Ovary (tissue), 10 donors: ENCODE measurements at regions of chr7 and their contacts with region 1.

Region 1: GRCh38 chr7:4681886-4682620 is at the start of gene FOXK1:
- DNase-seq: peak; percentile 73 to 88 (median 82)
- H3K4me3 ChIP-seq: peak within 1 kb of the TSS; percentile 81
- H3K27ac ChIP-seq: peak within 1 kb of the TSS; percentile 67 to 89
- H3K4me1 ChIP-seq: peaks cover 5% of the 10 kb centered on the region
- H3K27me3 ChIP-seq: no peaks in the 10 kb centered on the region
- CTCF ChIP-seq: no peak
- EP300 ChIP-seq: no peak
- POLR2A ChIP-seq: peak; percentile 32
- total RNA-seq, gene FOXK1: 10.9 to 43.9 (median 32.6) TPM

Region 2: GRCh38 chr7:3636131-3636860 is 1045.8 kb before region 1 on chr7:
- intact Hi-C with region 1: no loop called
- DNase-seq: no peak
- H3K4me3 ChIP-seq: no peak overlapping the region
- H3K27ac ChIP-seq: no peak overlapping the region
- H3K4me1 ChIP-seq: no peaks in the 10 kb centered on the region
- H3K27me3 ChIP-seq: no peaks in the 10 kb centered on the region
- CTCF ChIP-seq: no peak
- EP300 ChIP-seq: no peak
- POLR2A ChIP-seq: no peak

Region 3: GRCh38 chr7:4394736-4395135 is 287.3 kb before region 1 on chr7:
- intact Hi-C with region 1: no loop called
- DNase-seq: no peak
- H3K4me3 ChIP-seq: no peak overlapping the region
- H3K27ac ChIP-seq: no peak overlapping the region
- H3K4me1 ChIP-seq: no peaks in the 10 kb centered on the region
- H3K27me3 ChIP-seq: no peaks in the 10 kb centered on the region
- CTCF ChIP-seq: no peak
- EP300 ChIP-seq: no peak
- POLR2A ChIP-seq: no peak

Region 4: DNA sequence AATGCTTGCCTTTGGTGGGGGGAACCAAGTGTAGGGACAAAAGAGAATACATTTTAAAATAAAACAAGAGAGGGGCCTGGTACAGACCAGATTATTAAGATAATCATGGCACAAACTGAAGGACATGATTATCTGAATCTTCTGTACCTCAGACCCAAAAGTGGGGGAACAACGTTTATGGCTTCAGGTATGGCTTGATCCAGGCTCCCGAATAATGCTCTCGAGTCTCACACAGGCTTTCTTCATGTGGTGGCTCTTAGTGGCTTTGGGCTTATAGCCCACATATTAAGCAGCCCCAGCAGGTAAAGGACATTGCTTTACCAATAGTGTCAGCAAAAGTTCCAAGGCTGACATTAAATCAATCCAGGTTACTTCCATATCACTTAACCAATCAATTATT is 106.8 kb before region 1 on chr7:
- intact Hi-C with region 1: no loop called
- DNase-seq: no peak
- H3K4me3 ChIP-seq: no peak overlapping the region
- H3K27ac ChIP-seq: no peak overlapping the region
- H3K4me1 ChIP-seq: no peaks in the 10 kb centered on the region
- H3K27me3 ChIP-seq: no peaks in the 10 kb centered on the region
- CTCF ChIP-seq: no peak
- EP300 ChIP-seq: no peak
- POLR2A ChIP-seq: no peak

Region 5: GRCh38 chr7:4621401-4622145 is 60.5 kb before region 1 on chr7:
- intact Hi-C with region 1: no loop called
- DNase-seq: no peak
- H3K4me3 ChIP-seq: no peak overlapping the region
- H3K27ac ChIP-seq: no peak overlapping the region
- H3K4me1 ChIP-seq: no peaks in the 10 kb centered on the region
- H3K27me3 ChIP-seq: no peaks in the 10 kb centered on the region
- CTCF ChIP-seq: no peak
- EP300 ChIP-seq: no peak
- POLR2A ChIP-seq: no peak

Region 6: DNA sequence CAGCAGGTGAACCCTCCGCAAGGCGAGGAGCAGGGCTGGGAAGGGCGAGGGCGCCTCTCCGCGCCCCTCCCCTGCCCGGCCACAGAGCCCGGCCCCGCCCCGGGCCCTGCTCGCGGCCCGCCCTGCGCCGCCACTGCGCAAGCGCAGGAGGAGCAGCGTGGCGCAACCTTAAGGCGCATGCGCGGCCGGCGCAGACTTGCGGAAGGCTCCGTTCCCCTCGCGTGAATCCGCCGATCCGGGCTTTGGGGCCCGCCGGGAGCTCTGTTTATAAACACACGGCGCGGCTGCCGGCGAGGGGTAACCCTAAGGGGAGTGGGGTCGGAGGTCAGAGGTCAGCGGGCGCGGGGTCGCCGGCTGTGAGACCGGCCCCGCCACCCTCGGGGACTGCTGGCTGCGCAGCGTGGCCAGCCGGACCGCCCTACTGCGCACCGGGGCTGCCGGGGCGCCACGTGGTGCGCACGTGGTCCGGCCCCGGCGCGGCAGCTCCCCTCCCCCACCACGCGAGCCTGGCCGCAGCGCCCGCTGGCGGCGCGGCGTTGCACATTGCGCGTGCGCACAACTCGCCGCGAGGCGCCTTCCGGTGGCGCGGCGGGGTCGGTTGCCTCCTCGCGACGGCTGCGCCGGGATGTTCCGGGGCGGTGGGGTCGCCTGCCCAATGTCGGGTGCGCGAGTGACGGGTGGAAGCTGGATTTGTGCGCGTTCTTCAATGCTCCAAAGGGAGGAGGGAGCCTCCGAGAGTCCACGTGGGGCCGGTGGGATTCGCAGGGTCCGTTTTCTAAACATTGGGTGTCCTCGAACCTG is 40.2 kb before region 1 on chr7:
- intact Hi-C with region 1: loop called in 3 of 4 experiments (anchors 2 to 5 kb)
- DNase-seq: peak; percentile 93 to 99 (median 97)
- H3K4me3 ChIP-seq: peak overlapping the region; percentile 74
- H3K27ac ChIP-seq: peak overlapping the region; percentile 86 to 87
- H3K4me1 ChIP-seq: peaks cover 1% of the 10 kb centered on the region
- H3K27me3 ChIP-seq: no peaks in the 10 kb centered on the region
- CTCF ChIP-seq: peak in 2 of 3 donors; percentile 87 to 89
- EP300 ChIP-seq: no peak
- POLR2A ChIP-seq: peak; percentile 56